Activated CD8-positive, alpha-beta memory T cell treated with anti-CD3 and anti-CD28 coated beads, Interleukin-2, amount 10 ng/mL, durations not matched to agents 7 days and 5 days (primary cell): ENCODE measurements at regions of chr2 and their contacts with region 1.

Region 1: GRCh38 chr2:71000780-71001591 is 6.3 kb upstream of the TEX261 start:
- DNase-seq: peak; percentile 88
- ATAC-seq: peak; percentile 95
- H3K4me3 Mint-ChIP-seq: peak overlapping the region; percentile 66
- H3K27ac Mint-ChIP-seq: peak overlapping the region; percentile 80
- H3K4me1 Mint-ChIP-seq: peaks cover 27% of the 10 kb centered on the region
- H3K27me3 Mint-ChIP-seq: no peaks in the 10 kb centered on the region

Region 2: DNA sequence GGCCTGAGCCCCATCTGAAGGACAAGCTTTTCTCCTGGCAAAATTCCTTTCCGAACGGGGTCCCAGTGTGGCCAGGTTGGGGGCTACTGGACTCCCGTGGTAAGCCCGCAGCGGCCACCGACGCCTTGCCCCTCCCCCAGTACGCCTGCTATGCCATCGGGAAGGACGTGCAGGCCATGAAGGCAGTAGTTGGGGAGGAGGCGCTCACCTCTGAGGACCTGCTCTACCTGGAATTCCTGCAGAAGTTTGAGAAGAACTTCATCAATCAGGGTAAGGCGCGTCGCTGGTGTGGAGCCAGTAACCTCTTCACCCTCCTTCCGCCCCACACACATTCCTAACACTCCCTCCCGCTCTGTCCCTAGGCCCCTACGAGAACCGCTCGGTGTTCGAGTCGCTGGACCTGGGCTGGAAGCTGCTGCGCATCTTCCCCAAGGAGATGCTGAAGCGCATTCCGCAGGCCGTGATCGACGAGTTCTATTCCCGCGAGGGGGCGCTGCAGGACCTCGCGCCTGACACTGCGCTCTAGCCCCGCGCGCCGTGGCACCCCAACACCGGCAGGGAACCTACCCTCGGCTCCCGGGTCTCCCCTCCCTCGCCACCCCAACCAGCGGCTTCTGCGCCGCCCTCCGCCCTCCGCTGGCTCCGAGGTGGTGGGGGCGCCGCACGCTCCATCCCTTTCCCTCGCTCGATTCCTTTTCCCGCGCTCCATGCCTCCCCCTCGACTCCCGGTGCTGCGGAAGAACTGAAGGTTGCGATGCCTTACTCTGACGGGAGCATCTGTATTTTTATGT is 36.2 kb before region 1 on chr2:
- CTCF ChIA-PET with region 1: interaction called, 50 read pairs
- DNase-seq: peak; percentile 86
- ATAC-seq: peak; percentile 98
- H3K4me3 Mint-ChIP-seq: peak overlapping the region; percentile 83
- H3K27ac Mint-ChIP-seq: no peak overlapping the region
- H3K4me1 Mint-ChIP-seq: peaks cover 8% of the 10 kb centered on the region
- H3K27me3 Mint-ChIP-seq: peaks cover 39% of the 10 kb centered on the region

Region 3: GRCh38 chr2:70977605-70978205 is 23.3 kb before region 1 on chr2:
- CTCF ChIA-PET with region 1: interaction called, 72 read pairs
- DNase-seq: peak; percentile 43
- ATAC-seq: peak; percentile 20
- H3K4me3 Mint-ChIP-seq: peak overlapping the region; percentile 78
- H3K27ac Mint-ChIP-seq: peak overlapping the region; percentile 80
- H3K4me1 Mint-ChIP-seq: peaks cover 14% of the 10 kb centered on the region
- H3K27me3 Mint-ChIP-seq: peaks cover 9% of the 10 kb centered on the region

Region 4: GRCh38 chr2:70984576-70985282 is 16.3 kb before region 1 on chr2:
- CTCF ChIA-PET with region 1: interaction called, 72 read pairs
- DNase-seq: peak; percentile 88
- ATAC-seq: peak; percentile 99
- H3K4me3 Mint-ChIP-seq: no peak overlapping the region
- H3K27ac Mint-ChIP-seq: no peak overlapping the region
- H3K4me1 Mint-ChIP-seq: peaks cover 13% of the 10 kb centered on the region
- H3K27me3 Mint-ChIP-seq: no peaks in the 10 kb centered on the region

Region 5: DNA sequence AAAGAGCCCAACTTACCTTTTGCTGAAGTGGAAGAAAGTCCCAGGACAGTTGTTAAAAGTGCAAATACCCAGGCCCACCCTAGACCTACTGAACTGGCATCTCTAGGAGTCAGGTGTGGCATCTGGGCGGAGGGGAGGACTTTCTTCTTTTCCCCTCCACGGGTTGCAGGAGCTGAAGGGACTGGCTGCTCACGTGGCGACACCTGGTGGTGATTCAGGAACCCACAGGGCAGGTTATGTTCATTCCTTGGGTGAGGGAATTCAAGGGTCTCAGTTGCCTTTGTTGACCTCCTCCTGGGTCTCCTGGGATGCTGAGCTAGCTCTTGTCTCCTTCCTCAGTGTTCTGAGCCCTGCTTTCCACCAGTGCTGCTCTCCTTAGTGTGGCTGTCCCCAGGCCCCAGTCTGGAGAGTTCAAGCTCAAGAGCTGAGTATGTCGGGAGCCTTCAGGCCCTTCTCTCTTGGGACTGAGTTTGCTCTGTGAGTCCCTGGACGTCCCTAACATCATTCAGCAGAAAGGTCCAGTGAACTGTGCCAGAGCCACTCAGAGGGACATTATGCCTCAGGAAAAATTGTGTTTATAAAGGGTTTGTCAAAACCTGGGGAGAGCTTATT is 509.3 kb after region 1 on chr2:
- CTCF ChIA-PET with region 1: no interaction called
- DNase-seq: peak; percentile 76
- ATAC-seq: peak; percentile 63
- H3K4me3 Mint-ChIP-seq: no peak overlapping the region
- H3K27ac Mint-ChIP-seq: no peak overlapping the region
- H3K4me1 Mint-ChIP-seq: peaks cover 2% of the 10 kb centered on the region
- H3K27me3 Mint-ChIP-seq: peaks cover 2% of the 10 kb centered on the region